ENCODE measurements at regions of chr10 and their contacts with region 1.

Region 1: GRCh38 chr10:73625884-73626752 is 15.2 kb downstream of the MYOZ1 start:
- DNase-seq: peak; percentile 100
- ATAC-seq: peak; percentile 97
- H3K4me3 ChIP-seq: peak overlapping the region; percentile 76
- H3K27ac ChIP-seq: peak overlapping the region; percentile 40
- H3K4me1 ChIP-seq: peaks cover 14% of the 10 kb centered on the region
- H3K27me3 ChIP-seq: no peaks in the 10 kb centered on the region
- CTCF ChIP-seq: no peak

Region 2: DNA sequence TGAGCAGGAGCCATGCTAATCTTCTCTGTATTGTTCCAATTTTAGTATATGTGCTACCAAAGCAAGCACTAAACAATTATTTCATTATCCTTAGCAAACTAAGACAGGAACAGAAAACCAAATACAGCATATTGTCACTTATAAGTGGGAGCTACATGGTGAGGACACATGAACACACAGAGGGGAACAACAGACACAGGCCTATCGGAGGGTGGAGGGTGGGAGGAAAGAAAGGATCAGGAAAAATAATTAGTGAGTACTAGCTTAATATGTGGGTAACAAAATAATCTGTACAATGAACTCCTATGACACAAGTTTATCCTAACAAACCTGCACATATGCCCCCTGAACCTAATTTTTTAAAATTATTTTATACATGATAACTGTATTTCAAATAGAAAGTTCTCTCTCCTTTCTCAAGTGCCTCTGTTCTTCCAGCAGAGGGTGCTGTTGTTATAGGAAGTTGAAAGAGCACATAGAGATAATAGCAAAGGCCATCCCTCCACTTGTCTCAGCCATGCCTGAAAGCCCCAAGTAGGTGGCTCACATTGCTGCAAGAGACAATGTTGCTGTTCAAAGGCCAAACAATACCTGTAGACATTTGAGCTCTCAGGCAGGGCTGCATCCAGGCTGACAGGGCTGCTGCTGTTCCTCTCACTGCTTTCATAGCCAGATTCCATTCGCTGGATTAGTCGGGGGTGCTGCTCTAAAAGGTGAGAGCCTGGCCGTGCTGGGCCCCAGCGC is 96.9 kb before region 1 on chr10:
- CTCF ChIA-PET with region 1: interaction called, 9 read pairs
- POLR2A ChIA-PET with region 1: interaction called, 3 read pairs
- intact Hi-C with region 1: loop called (anchors 1 kb)
- DNase-seq: peak; percentile 99
- ATAC-seq: peak; percentile 97
- H3K4me3 ChIP-seq: no peak overlapping the region
- H3K27ac ChIP-seq: no peak overlapping the region
- H3K4me1 ChIP-seq: no peaks in the 10 kb centered on the region
- H3K27me3 ChIP-seq: no peaks in the 10 kb centered on the region
- CTCF ChIP-seq: peak; percentile 100

Region 3: DNA sequence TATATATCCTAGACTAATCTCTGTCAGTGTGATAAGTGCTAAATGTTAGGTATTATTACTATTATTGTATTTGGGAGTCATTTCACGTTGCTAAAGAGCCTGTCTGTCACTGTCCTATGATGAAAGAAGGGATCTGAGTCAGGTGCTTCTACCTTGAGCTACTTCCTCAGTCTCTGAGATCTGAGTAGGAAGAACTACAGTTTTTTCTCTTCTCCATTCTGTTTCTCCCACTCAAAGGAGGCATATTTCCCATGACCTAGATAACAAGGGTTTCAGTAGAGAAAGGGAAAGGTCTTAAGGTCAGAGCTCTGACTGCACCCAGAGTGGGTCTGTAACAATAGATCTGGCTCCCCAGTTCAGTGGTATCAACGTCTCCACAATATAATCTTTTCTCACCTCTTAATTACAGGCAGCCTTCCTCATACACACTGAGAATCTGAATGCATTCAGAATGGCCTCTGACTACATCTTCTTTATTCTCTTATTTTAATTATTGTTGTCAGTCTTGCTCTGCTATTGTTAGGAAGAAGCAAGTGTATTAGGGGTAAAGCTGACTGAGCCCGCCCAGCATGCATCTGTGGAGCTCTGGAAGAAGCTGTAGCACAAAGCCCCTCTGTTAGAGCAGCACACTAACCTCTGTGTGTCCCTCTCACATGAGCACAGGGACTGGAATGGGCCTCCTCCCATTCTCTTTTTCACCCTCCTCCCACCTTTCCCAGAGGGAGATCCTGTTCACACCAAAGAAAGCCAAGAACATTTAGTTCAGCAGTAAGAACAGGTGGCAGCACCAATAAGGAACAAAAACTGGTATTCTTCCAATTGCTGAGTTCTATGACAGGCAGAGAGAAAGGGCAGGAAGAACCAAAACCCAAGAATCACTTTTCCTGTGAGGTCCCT is 73.1 kb before region 1 on chr10:
- CTCF ChIA-PET with region 1: no interaction called
- POLR2A ChIA-PET with region 1: no interaction called
- intact Hi-C with region 1: no loop called
- DNase-seq: no peak
- ATAC-seq: peak; percentile 32; the same call in 1 of the 2 replicates
- H3K4me3 ChIP-seq: no peak overlapping the region
- H3K27ac ChIP-seq: no peak overlapping the region
- H3K4me1 ChIP-seq: no peaks in the 10 kb centered on the region
- H3K27me3 ChIP-seq: no peaks in the 10 kb centered on the region
- CTCF ChIP-seq: no peak

Region 4: GRCh38 chr10:73576178-73576889 is 49.8 kb before region 1 on chr10:
- CTCF ChIA-PET with region 1: interaction called, 21 read pairs
- POLR2A ChIA-PET with region 1: interaction called, 5 read pairs
- intact Hi-C with region 1: loop called (anchors 1 kb)
- DNase-seq: peak; percentile 98
- ATAC-seq: peak; percentile 61
- H3K4me3 ChIP-seq: no peak overlapping the region
- H3K27ac ChIP-seq: peak overlapping the region; percentile 49
- H3K4me1 ChIP-seq: peaks cover 34% of the 10 kb centered on the region
- H3K27me3 ChIP-seq: no peaks in the 10 kb centered on the region
- CTCF ChIP-seq: no peak